H1 (cell line): ENCODE measurements at regions of chr6 and their contacts with region 1.

Region 1: GRCh38 chr6:14046476-14047068 is 71.0 kb upstream of the CD83 start:
- DNase-seq: peak; percentile 23 to 66
- H3K4me3 ChIP-seq: no peak overlapping the region
- H3K27ac ChIP-seq: no peak overlapping the region
- H3K4me1 ChIP-seq: no peaks in the 10 kb centered on the region
- H3K27me3 ChIP-seq: no peaks in the 10 kb centered on the region; a peak in 1 of 7 replicates
- CTCF ChIP-seq: peak; percentile 71 to 80 (median 79)
- EP300 ChIP-seq: no peak
- POLR2A ChIP-seq: no peak
- RAD21 ChIP-seq: peak; percentile 70 to 77

Region 2: GRCh38 chr6:13903364-13903763 is 143.2 kb before region 1 on chr6:
- CTCF ChIA-PET with region 1: interaction called, 126 read pairs
- POLR2A ChIA-PET with region 1: no interaction called
- DNase-seq: no peak
- H3K4me3 ChIP-seq: no peak overlapping the region
- H3K27ac ChIP-seq: no peak overlapping the region
- H3K4me1 ChIP-seq: no peaks in the 10 kb centered on the region
- H3K27me3 ChIP-seq: no peaks in the 10 kb centered on the region
- CTCF ChIP-seq: no peak
- EP300 ChIP-seq: no peak
- POLR2A ChIP-seq: no peak
- RAD21 ChIP-seq: no peak

Region 3: DNA sequence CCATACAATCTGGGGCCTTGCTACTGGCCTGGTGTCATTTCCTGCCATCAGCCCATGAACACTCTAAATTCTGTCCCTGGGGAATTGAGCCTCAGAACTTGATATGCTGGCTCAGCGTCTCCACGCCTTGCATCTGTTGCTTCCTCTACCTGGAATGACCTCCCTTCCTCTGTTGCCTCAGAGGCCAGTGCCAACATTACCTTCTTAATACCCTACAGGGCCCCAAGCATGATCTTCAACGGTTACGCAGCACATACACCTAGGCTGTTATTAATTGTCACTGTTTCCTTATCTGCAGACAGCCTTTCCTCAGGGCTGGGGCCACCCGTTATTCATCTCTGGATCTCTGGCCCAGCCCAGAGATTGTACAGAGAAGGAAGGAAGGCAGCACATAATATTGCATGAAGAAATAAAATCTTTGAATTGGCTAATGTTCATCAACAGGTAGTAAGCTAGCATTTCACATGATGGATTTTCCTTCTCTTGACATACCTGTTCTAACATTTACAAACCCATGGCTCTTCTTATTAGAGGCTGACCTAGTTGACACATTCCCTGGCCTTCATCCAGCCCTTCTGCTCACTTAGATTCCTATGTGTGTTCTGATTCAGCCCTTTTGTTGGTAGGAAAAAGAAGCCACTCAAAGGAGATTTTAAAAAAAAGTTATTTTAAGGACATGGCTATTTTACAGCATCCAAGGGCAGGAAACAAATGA is 130.2 kb before region 1 on chr6:
- CTCF ChIA-PET with region 1: interaction called, 133 read pairs
- POLR2A ChIA-PET with region 1: no interaction called
- DNase-seq: no peak
- H3K4me3 ChIP-seq: no peak overlapping the region
- H3K27ac ChIP-seq: no peak overlapping the region
- H3K4me1 ChIP-seq: peaks cover 0 to 16% (median 4%) of the 10 kb centered on the region in 4 experiments; a peak in 2 of 7 replicates
- H3K27me3 ChIP-seq: no peaks in the 10 kb centered on the region
- CTCF ChIP-seq: no peak
- EP300 ChIP-seq: no peak
- POLR2A ChIP-seq: no peak
- RAD21 ChIP-seq: no peak

Region 4: DNA sequence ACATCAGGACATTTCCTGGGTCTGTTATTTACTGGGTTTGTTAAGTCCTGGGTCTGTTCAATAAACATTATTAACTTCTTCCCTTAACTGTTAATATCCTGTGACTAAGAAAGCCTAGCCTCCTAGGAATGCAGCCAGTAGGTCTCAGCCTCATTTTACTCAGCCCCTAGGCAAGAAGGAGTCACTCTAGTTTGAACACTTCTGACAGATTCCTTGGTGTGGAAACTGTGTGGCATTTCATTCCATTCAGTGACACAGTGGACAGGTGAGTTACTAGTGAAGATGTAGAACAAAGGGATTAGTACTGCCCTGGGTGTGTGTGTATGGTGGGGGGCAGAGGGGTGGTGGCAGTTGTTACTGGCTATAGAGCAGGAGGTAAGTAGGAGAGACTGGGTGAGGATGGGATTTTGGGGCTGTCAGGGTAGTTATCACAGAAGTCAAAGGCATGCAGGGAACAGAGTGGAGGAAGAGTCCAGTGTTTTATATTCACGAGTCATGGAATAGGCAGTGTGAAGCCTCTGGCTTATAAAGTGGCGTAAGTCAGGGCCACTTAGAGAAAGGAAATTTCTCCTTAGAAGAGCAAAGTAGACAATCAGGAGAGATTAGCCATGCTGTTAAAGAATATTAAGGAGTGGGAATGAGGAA is 93.4 kb before region 1 on chr6:
- CTCF ChIA-PET with region 1: no interaction called
- POLR2A ChIA-PET with region 1: no interaction called
- DNase-seq: no peak
- H3K4me3 ChIP-seq: no peak overlapping the region
- H3K27ac ChIP-seq: no peak overlapping the region
- H3K4me1 ChIP-seq: no peaks in the 10 kb centered on the region
- H3K27me3 ChIP-seq: no peaks in the 10 kb centered on the region
- CTCF ChIP-seq: no peak
- EP300 ChIP-seq: no peak
- POLR2A ChIP-seq: no peak
- RAD21 ChIP-seq: no peak

Region 5: GRCh38 chr6:14009431-14009830 is 37.1 kb before region 1 on chr6:
- CTCF ChIA-PET with region 1: interaction called, 189 read pairs
- POLR2A ChIA-PET with region 1: no interaction called
- DNase-seq: no peak
- H3K4me3 ChIP-seq: no peak overlapping the region
- H3K27ac ChIP-seq: no peak overlapping the region
- H3K4me1 ChIP-seq: peaks cover 0 to 17% (median 7%) of the 10 kb centered on the region in 4 experiments; a peak in 6 of 7 replicates
- H3K27me3 ChIP-seq: no peaks in the 10 kb centered on the region; a peak in 1 of 7 replicates
- CTCF ChIP-seq: peak in 1 of 3 experiments; percentile 1; a peak in 1 of 4 replicates
- EP300 ChIP-seq: no peak
- POLR2A ChIP-seq: no peak
- RAD21 ChIP-seq: no peak

Region 6: DNA sequence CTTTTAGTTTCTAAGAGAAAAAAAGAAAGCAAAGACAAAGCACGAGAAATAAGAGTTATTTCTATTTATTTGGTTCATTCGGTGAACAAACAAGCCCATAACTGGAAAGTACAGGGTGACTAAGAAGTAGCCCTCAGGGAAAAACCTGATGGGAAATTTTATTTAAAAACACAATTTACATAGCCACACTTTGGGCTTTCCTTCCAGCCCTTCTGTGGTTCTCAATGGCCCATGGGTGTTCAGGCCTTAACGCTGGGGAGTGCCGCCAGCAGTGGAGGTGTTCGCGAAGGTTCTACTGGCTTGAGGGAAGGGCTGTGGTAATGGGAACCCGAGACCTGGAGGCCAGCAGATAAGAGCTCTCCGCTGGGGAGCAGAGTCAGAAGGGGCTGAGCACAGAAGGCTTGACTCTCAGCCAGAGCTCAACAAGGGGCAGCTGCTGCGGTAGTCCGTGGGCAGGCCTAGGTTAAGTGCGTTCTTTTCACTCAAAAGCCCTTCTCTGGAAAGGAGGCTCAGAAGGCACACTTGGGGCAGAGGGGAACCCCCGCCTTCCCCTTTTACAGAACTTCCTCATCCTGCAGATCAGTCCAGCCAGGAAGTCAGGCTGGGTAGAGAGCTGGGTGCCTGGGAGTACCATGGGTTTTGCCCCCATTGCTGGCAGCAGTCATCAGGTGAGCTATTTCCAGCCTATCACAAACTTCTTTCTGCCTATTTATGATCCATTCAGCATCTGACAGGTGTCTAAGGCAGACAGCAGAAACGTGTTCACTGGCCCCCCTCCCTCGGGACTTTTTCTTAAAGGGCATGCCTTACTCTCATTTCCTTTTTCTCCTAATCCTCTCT is 62.2 kb after region 1 on chr6:
- CTCF ChIA-PET with region 1: no interaction called
- POLR2A ChIA-PET with region 1: no interaction called
- DNase-seq: no peak
- H3K4me3 ChIP-seq: no peak overlapping the region
- H3K27ac ChIP-seq: no peak overlapping the region
- H3K4me1 ChIP-seq: no peaks in the 10 kb centered on the region; a peak in 1 of 7 replicates
- H3K27me3 ChIP-seq: no peaks in the 10 kb centered on the region
- CTCF ChIP-seq: no peak
- EP300 ChIP-seq: no peak
- POLR2A ChIP-seq: no peak
- RAD21 ChIP-seq: no peak

Region 7: GRCh38 chr6:14144678-14145113 is 98.1 kb after region 1 on chr6:
- CTCF ChIA-PET with region 1: interaction called, 10 read pairs
- POLR2A ChIA-PET with region 1: no interaction called
- DNase-seq: peak; percentile 76 to 92
- H3K4me3 ChIP-seq: no peak overlapping the region
- H3K27ac ChIP-seq: no peak overlapping the region
- H3K4me1 ChIP-seq: no peaks in the 10 kb centered on the region; a peak in 2 of 7 replicates
- H3K27me3 ChIP-seq: no peaks in the 10 kb centered on the region; a peak in 1 of 7 replicates
- CTCF ChIP-seq: peak; percentile 88 to 98 (median 97)
- EP300 ChIP-seq: no peak
- POLR2A ChIP-seq: no peak
- RAD21 ChIP-seq: peak; percentile 90 to 93